ENCODE measurements at regions of chr10 and their contacts with region 1.

Region 1: GRCh38 chr10:28302638-28303488 is at the start of gene MPP7:
- DNase-seq: peak; percentile 96
- ATAC-seq: peak; percentile 98
- H3K4me3 Mint-ChIP-seq: peak within 1 kb of the TSS; percentile 88
- H3K27ac Mint-ChIP-seq: peak within 1 kb of the TSS; percentile 72
- H3K4me1 Mint-ChIP-seq: peaks cover 30% of the 10 kb centered on the region
- H3K27me3 Mint-ChIP-seq: peaks cover 32% of the 10 kb centered on the region
- total RNA-seq, gene MPP7: 1.4 to 3.7 TPM

Region 2: GRCh38 chr10:28250782-28251181 is 52.1 kb before region 1 on chr10:
- CTCF ChIA-PET with region 1: interaction called, 27 read pairs
- DNase-seq: no peak
- ATAC-seq: no peak
- H3K4me3 Mint-ChIP-seq: no peak overlapping the region
- H3K27ac Mint-ChIP-seq: no peak overlapping the region
- H3K4me1 Mint-ChIP-seq: peaks cover 4% of the 10 kb centered on the region
- H3K27me3 Mint-ChIP-seq: no peaks in the 10 kb centered on the region

Region 3: GRCh38 chr10:28326516-28327490 is 23.9 kb after region 1 on chr10:
- CTCF ChIA-PET with region 1: interaction called, 51 read pairs
- DNase-seq: no peak
- ATAC-seq: no peak
- H3K4me3 Mint-ChIP-seq: no peak overlapping the region
- H3K27ac Mint-ChIP-seq: no peak overlapping the region
- H3K4me1 Mint-ChIP-seq: peaks cover 24% of the 10 kb centered on the region
- H3K27me3 Mint-ChIP-seq: no peaks in the 10 kb centered on the region

Region 4: GRCh38 chr10:28367929-28368484 is 65.1 kb after region 1 on chr10:
- CTCF ChIA-PET with region 1: interaction called, 24 read pairs
- DNase-seq: peak; percentile 82
- ATAC-seq: peak; percentile 98
- H3K4me3 Mint-ChIP-seq: peak overlapping the region; percentile 43
- H3K27ac Mint-ChIP-seq: peak overlapping the region; percentile 85
- H3K4me1 Mint-ChIP-seq: peaks cover 34% of the 10 kb centered on the region
- H3K27me3 Mint-ChIP-seq: peaks cover 8% of the 10 kb centered on the region

Region 5: DNA sequence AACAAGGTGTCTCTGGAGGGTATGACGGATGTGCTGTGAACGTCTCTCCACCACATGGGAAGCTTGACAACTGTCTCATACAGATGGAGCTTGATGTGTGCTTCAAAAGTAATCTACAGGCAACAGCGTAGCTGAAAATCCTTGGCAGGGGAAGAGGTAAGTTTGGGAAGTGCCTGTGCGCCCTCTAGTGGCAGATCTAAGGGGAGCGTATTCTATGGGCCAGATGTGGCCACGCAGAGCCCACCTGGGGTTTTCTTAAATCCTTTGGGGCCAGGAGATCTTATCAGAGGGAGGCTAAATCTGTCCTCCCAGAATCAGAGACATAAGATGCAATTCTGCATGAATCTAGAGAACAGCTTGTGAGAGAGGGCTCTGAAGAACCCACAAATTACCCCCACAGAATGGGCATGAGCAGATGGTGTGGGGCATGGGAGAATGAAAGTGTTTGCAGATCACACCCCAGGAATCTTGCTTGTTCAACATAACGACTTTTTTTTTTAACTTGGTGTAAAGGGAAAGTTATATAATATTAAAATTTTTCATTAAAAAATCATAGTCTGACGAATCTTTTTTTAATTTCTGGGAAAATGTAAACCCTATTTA is 91.2 kb after region 1 on chr10:
- CTCF ChIA-PET with region 1: interaction called, 15 read pairs
- DNase-seq: peak; percentile 67
- ATAC-seq: peak; percentile 81
- H3K4me3 Mint-ChIP-seq: no peak overlapping the region
- H3K27ac Mint-ChIP-seq: no peak overlapping the region
- H3K4me1 Mint-ChIP-seq: peaks cover 4% of the 10 kb centered on the region
- H3K27me3 Mint-ChIP-seq: no peaks in the 10 kb centered on the region

Region 6: DNA sequence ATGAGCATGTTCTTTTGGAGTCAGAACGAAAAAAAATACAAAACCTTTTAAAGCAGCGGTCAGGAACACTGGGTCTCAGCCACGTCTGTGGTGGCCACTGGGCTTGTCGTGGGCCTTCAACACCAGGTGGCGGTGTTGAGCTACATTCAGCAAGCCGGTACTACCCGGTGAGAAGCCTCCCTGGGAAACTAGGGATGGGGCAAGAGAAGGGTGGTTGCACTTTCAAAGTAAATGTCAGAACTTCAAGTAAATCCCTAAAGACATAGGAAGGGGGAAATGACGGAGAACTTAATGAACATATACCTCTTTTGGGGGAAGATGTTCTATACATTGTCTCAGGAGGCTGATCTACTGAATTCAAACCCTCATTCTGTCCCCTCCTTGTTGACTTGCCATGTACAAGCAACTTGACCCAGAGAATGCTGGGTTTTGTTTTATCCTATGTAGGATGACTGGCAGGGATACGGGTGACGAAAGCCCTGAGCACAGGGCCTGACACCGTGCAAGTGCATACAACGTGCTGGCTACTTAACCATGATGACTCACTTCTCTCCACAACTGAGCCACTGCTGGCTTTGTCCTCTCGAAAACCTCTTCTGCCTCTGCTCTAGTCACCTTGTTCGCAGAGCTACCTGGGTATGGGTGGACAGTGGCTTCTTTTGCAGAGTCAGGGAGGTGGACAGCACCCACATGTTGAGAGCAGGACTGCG is 325.5 kb after region 1 on chr10:
- CTCF ChIA-PET with region 1: no interaction called
- DNase-seq: peak; percentile 77
- ATAC-seq: peak; percentile 87
- H3K4me3 Mint-ChIP-seq: no peak overlapping the region
- H3K27ac Mint-ChIP-seq: no peak overlapping the region
- H3K4me1 Mint-ChIP-seq: peaks cover 6% of the 10 kb centered on the region
- H3K27me3 Mint-ChIP-seq: peaks cover 21% of the 10 kb centered on the region